ENCODE measurements at regions of chr1 and their contacts with region 1.

Region 1: GRCh38 chr1:181479137-181479745 is 4.1 kb upstream of the CACNA1E start:
- DNase-seq: peak; percentile 63
- ATAC-seq: peak; percentile 83
- H3K4me3 ChIP-seq: no peak overlapping the region
- H3K27ac ChIP-seq: no peak overlapping the region
- H3K4me1 ChIP-seq: no peaks in the 10 kb centered on the region
- H3K27me3 ChIP-seq: peaks cover 29% of the 10 kb centered on the region
- CTCF ChIP-seq: peak; percentile 71

Region 2: GRCh38 chr1:181676269-181676668 is 197.0 kb after region 1 on chr1:
- CTCF ChIA-PET with region 1: no interaction called
- POLR2A ChIA-PET with region 1: no interaction called
- intact Hi-C with region 1: loop called (anchors 1 kb)
- DNase-seq: peak; percentile 32
- ATAC-seq: no peak
- H3K4me3 ChIP-seq: no peak overlapping the region
- H3K27ac ChIP-seq: no peak overlapping the region
- H3K4me1 ChIP-seq: no peaks in the 10 kb centered on the region
- H3K27me3 ChIP-seq: no peaks in the 10 kb centered on the region
- CTCF ChIP-seq: peak; percentile 47

Region 3: GRCh38 chr1:181936768-181937581 is 457.7 kb after region 1 on chr1:
- CTCF ChIA-PET with region 1: no interaction called
- POLR2A ChIA-PET with region 1: no interaction called
- intact Hi-C with region 1: loop called (anchors 1 kb)
- DNase-seq: peak; percentile 65
- ATAC-seq: peak; percentile 33
- H3K4me3 ChIP-seq: no peak overlapping the region
- H3K27ac ChIP-seq: no peak overlapping the region
- H3K4me1 ChIP-seq: no peaks in the 10 kb centered on the region
- H3K27me3 ChIP-seq: no peaks in the 10 kb centered on the region
- CTCF ChIP-seq: peak; percentile 65